Activated CD4-positive, alpha-beta T cell treated with anti-CD3 and anti-CD28 coated beads, Interleukin-2, amount 10 ng/mL, durations not matched to agents 24 days and 14 days (primary cell): ENCODE measurements at regions of chr5 and their contacts with region 1.

Region 1: DNA sequence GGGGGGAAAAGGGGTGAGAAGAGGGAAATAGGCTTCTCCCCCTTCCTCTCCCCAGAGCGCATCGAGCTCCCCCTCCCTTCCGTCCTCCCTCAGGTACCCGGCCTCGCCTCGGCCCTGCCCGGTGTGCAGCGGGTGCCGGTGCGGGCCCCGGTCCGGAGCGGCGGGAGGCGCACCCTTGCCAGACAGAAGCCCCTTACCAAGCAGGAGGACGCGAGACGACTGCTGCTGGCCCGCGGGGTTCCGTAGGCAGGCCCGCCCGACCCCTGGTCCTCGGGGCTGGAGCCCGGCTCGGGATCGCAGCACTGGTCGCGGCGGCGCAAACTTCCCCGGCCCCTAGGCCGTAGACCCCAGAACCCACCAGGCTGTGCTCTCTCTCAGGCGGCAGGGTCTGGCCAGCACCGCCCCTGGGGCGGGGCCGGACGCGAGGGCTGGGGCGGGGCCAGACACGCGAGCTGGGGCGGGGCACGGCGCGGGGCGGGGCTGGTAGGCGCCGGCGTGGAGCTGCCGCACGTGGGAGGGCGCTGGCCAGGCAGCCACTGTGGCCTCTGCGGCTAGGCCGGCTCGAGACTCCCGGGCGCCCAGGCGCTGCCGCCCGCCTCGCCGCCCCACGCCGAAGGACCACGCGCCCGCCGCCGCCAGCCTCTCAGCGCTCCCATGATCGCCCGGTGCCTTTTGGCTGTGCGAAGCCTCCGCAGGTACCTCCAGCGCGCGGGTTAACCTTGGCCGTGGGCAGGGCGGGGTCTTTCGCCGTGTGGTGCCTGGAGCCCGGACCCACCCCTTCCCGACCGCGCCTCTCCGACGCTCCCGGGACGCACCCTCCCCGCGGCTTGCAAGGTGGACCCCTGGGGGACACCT is at the starts of genes NLN and SGTB:
- DNase-seq: peak; percentile 96
- H3K4me3 Mint-ChIP-seq: peak within 1 kb of the TSS; percentile 95
- H3K27ac Mint-ChIP-seq: peak within 1 kb of the TSS; percentile 96
- H3K4me1 Mint-ChIP-seq: peaks cover 31% of the 10 kb centered on the region
- H3K27me3 Mint-ChIP-seq: no peaks in the 10 kb centered on the region
- total RNA-seq, gene NLN: 28.0 and 30.7 TPM in 2 replicates
- total RNA-seq, gene SGTB: 10.0 and 10.3 TPM in 2 replicates

Region 2: DNA sequence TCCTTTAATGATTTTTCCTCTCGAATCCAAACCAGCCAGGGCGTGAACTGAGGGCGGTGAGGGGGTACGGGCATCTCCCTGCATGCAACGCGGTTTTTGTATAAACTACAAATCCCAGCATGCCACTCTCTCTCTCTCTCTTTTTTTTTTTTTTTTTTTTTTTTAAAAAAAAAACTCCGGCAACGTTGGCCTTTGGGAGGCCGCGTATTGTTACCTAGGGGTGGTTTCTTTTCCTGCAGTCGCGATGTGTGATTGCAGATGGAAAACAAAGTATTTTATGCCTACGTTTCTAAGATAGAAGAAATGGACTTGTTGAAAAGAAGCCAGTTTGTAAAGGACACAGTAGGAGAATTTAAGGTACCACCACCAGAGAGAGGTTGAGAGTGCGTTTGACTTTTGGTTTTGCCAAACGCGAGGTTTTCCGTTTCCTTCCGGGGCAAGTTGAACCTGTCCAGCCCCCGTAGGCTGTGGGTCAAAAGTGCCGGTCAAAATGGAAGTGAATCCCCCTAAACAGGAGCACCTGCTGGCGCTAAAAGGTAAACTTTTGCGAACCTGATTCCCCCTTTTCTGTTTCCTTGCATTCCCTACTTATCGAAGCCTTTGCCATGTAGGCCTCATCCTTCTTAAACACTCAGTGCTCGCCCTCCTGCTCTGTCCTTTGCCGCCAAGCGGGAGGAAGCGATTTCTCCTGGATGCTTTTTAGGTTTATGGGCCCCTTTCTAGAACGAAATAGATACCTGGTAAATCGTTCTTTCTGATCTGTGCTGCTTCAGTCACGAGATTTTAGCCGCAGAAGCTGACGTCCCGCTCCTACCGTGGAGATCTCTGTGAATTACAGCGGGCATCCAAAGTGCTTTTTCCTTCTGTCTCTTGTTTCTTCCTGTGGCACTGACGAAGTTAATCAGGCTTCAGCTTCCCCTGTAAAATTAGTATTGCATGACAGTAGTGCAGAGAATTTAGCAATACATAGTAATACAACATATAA is 97.1 kb before region 1 on chr5 and contains the starts of genes SHLD3 and TRAPPC13:
- intact Hi-C with region 1: loop called (anchors 1 kb)
- DNase-seq: peak; percentile 95
- H3K4me3 Mint-ChIP-seq: peak within 1 kb of the TSS; percentile 91
- H3K27ac Mint-ChIP-seq: peak within 1 kb of the TSS; percentile 99
- H3K4me1 Mint-ChIP-seq: peaks cover 28% of the 10 kb centered on the region
- H3K27me3 Mint-ChIP-seq: no peaks in the 10 kb centered on the region
- total RNA-seq, gene SHLD3: 4.7 and 5.1 TPM in 2 replicates
- total RNA-seq, gene TRAPPC13: 22.4 and 27.2 TPM in 2 replicates

Region 3: GRCh38 chr5:65749956-65750355 is 28.0 kb after region 1 on chr5:
- intact Hi-C with region 1: no loop called
- DNase-seq: no peak
- H3K4me3 Mint-ChIP-seq: no peak overlapping the region
- H3K27ac Mint-ChIP-seq: no peak overlapping the region
- H3K4me1 Mint-ChIP-seq: no peaks in the 10 kb centered on the region
- H3K27me3 Mint-ChIP-seq: no peaks in the 10 kb centered on the region

Region 4: DNA sequence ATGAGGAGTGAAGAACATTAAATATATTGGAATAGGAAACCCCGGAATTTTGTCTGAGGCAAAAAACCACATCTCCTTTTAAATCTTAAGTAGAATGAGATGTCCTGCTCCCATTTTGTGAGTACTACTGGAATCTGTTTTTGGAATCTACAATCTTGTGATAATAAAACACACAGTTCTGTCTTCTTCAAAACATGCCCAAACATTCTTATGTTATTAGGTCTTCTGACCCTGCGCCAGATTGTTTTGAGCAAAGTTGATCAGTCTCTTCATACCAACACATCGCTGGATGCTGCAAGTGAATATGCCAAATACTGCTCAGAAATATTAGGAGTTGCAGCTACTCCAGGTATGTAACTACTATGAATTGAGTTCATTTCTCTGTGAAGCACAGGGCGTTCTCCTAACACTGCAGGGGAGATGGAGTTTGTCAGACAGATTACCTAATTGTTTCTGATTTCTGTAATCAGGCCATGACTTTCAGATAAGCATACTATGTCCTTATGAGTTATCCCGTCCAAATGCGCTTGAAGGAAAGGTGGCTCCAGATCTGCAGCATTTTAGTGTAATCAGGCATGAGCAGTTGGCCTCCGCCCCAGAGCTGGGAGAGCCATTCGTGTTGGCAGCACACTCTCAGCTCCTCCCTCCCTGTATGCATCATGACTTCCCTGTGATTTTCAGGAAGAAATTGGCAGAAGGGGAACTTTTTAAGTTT is 88.0 kb after region 1 on chr5:
- intact Hi-C with region 1: loop called (anchors 5 kb)
- DNase-seq: no peak
- H3K4me3 Mint-ChIP-seq: no peak overlapping the region
- H3K27ac Mint-ChIP-seq: no peak overlapping the region
- H3K4me1 Mint-ChIP-seq: peaks cover 16% of the 10 kb centered on the region
- H3K27me3 Mint-ChIP-seq: no peaks in the 10 kb centered on the region